Astrocyte of the cerebellum (primary cell): ENCODE measurements at regions of chr5 and their contacts with region 1.

Region 1: GRCh38 chr5:95471942-95472341 is 80.8 kb downstream of the FAM81B start:
- DNase-seq: peak; percentile 2
- H3K4me3 ChIP-seq: no peak overlapping the region
- CTCF ChIP-seq: peak; percentile 14

Region 2: DNA sequence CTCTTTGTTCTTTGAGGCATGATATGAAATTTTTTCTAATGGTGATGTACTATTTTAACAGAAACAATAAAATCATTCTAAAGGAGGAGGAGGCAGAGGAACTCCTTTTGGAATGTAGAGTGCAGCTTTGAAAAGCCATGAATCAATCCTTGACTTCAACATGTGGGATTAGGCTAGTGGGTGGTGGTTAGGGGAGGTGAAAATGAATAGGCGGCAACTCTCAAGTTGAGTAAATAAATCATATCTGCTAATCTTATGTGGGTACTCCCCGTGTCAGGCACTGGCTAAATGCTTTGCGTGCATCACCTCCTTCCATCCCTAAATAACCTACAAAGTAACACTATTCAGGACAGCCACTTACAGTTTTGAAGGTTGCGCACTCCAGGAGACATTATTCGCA is 45.7 kb before region 1 on chr5:
- in situ Hi-C with region 1: loop called (anchors 5 kb)
- DNase-seq: no peak
- H3K4me3 ChIP-seq: no peak overlapping the region
- CTCF ChIP-seq: no peak